Esophagus squamous epithelium (tissue), 5 donors: ENCODE measurements at regions of chr5 and their contacts with region 1.

Region 1: DNA sequence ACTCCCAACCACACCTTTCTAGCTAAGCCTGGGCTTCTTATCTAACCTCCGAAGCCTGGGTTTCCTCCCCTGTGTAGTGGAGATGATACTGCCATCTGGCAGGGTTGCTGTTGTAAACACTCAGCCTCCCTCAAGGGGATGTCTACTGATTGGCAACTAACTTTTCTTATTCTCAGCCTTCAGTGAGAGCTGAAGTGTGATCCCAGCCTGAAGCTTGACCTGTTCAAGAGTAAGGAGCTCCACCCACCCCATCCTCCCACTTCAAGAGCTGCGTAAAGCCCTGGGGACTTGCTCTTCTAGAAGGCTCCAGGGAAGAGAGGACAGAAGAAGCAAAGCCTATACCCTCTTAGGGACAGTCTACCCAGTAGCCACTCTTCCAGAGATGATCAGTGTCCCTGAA is 21.4 kb upstream of the WWC1 start:
- DNase-seq: no peak
- H3K4me3 ChIP-seq: no peak overlapping the region
- H3K27ac ChIP-seq: no peak overlapping the region
- H3K4me1 ChIP-seq: peaks cover 6 to 19% (median 14%) of the 10 kb centered on the region in 3 donors
- H3K27me3 ChIP-seq: no peaks in the 10 kb centered on the region
- CTCF ChIP-seq: no peak
- POLR2A ChIP-seq: no peak

Region 2: GRCh38 chr5:168409580-168410458 is 139.8 kb after region 1 on chr5:
- intact Hi-C with region 1: loop called (anchors 10 kb)
- DNase-seq: no peak
- H3K4me3 ChIP-seq: no peak overlapping the region
- H3K27ac ChIP-seq: no peak overlapping the region
- H3K4me1 ChIP-seq: no peaks in the 10 kb centered on the region
- H3K27me3 ChIP-seq: no peaks in the 10 kb centered on the region
- CTCF ChIP-seq: no peak
- POLR2A ChIP-seq: no peak

Region 3: GRCh38 chr5:168486136-168486879 is 216.3 kb after region 1 on chr5 and contains the start of gene RARS1:
- intact Hi-C with region 1: loop called (anchors 10 kb)
- DNase-seq: peak; percentile 22
- H3K4me3 ChIP-seq: peak within 1 kb of the TSS; percentile 72 to 95 (median 94)
- H3K27ac ChIP-seq: peak within 1 kb of the TSS; percentile 69 to 89 (median 84)
- H3K4me1 ChIP-seq: peaks cover 5 to 21% (median 10%) of the 10 kb centered on the region in 3 donors
- H3K27me3 ChIP-seq: no peaks in the 10 kb centered on the region
- CTCF ChIP-seq: peak; percentile 81 to 98 (median 92)
- POLR2A ChIP-seq: peak in 3 of 4 donors; percentile 70 to 81 (median 77)
- total RNA-seq, gene RARS1: 56.6 to 124 (median 85.8) TPM